ENCODE measurements at regions of chr18 and their contacts with region 1.

Region 1: DNA sequence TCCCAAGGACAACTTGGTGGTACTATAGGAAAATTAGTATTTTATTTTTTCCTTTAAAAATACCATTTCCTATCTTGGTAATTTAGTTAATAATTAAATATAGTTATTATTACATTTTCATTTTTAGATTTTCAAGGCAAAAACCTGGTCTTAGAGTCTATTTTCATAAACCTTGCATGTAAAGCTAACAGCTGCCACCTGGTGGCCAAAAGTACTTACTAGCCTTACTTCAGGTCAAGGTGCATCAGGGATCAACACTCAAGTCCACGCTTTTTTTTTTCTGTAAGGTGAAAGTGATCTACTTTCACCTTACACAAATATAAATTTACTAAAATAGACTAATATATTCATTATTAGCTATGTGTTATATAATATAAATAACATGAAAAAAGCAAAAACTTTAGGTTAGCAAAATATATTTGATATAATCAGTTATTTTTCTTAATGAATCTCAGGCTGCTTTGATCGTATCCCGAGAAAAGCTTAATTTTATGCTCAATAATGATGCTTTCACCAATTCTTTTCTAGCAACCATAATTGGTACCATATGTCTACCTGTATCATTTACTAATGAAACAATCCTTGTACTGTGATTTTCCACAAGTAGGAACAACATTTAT is 62.5 kb downstream of the RELCH start:
- DNase-seq: peak; percentile 52 to 83 (median 71)
- ATAC-seq: no peak
- H3K4me3 ChIP-seq: no peak overlapping the region
- H3K27ac ChIP-seq: no peak overlapping the region
- H3K4me1 ChIP-seq: no peaks in the 10 kb centered on the region
- H3K27me3 ChIP-seq: no peaks in the 10 kb centered on the region

Region 2: GRCh38 chr18:62091487-62092120 is 158.0 kb before region 1 on chr18:
- intact Hi-C with region 1: no loop called
- DNase-seq: no peak
- ATAC-seq: peak in 1 of 2 donors; percentile 57
- H3K4me3 ChIP-seq: no peak overlapping the region
- H3K27ac ChIP-seq: no peak overlapping the region
- H3K4me1 ChIP-seq: no peaks in the 10 kb centered on the region
- H3K27me3 ChIP-seq: no peaks in the 10 kb centered on the region

Region 3: DNA sequence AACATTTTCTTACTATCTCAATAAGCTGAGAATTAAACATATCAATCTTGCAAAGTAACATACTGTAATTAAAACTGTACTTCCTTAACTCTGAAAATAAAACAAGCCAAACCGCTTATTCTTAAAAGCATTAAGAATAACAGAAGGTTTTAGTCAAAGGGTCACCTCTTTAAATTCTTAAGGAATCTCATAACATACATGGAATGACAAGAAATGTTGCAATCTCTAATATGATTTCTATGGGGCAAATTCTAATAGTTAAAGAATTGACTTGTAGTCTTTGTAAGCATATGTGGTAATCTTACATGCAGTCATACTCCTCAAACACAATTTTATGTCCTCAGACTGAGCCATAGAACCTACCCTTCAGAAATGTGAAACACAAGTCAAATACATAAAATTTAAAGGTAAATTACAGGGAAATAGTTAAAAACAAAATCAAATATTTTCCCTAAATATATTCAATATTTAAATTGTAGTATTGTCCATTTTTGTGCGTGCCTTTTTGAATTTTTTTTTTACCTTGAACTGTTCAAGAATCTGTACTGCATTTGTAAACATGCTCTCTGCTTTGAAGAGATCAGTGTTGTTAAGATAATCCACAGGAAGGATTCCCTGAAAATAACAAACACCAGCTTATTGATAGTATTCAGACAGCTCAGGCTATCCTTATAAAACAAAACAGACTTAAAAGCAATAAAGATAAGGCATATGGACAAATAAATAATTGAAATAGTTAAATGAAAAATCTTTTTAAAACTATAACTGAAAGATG is 110.9 kb before region 1 on chr18:
- intact Hi-C with region 1: no loop called
- DNase-seq: no peak
- ATAC-seq: no peak
- H3K4me3 ChIP-seq: no peak overlapping the region
- H3K27ac ChIP-seq: no peak overlapping the region
- H3K4me1 ChIP-seq: no peaks in the 10 kb centered on the region
- H3K27me3 ChIP-seq: no peaks in the 10 kb centered on the region

Region 4: DNA sequence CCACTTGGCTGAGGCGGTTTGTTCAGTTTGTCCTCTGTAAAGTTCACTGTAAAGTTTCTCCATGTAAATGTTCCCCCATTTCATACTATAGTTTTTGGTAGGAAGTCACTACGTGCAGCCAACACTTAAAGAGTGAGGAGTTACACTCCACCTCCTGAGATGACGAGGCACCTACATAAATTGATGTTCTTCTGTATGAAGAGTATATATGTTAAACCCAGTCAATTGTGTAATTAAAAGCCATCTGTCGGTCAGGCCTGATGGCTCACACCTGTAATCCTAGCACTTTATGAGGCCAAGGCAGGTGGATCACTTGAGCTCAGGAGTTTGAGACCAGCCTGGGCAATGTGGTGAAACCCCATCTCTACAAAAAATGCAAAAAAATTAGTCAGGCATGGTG is 70.4 kb before region 1 on chr18:
- intact Hi-C with region 1: loop called in 3 of 4 experiments (anchors 5 to 10 kb)
- DNase-seq: no peak
- ATAC-seq: no peak
- H3K4me3 ChIP-seq: no peak overlapping the region
- H3K27ac ChIP-seq: no peak overlapping the region
- H3K4me1 ChIP-seq: peaks cover 2% of the 10 kb centered on the region
- H3K27me3 ChIP-seq: no peaks in the 10 kb centered on the region

Region 5: GRCh38 chr18:62186774-62187542 is 62.6 kb before region 1 on chr18 and contains the starts of genes PIGN and RELCH:
- intact Hi-C with region 1: loop called in 3 of 4 experiments (anchors 5 to 10 kb)
- DNase-seq: peak; percentile 95 to 97 (median 96)
- ATAC-seq: peak; percentile 99 to 100
- H3K4me3 ChIP-seq: peak within 1 kb of the TSS; percentile 65
- H3K27ac ChIP-seq: peak within 1 kb of the TSS; percentile 88
- H3K4me1 ChIP-seq: no peaks in the 10 kb centered on the region
- H3K27me3 ChIP-seq: no peaks in the 10 kb centered on the region
- total RNA-seq, gene PIGN: 14.4 to 21.6 (median 16.4) TPM
- total RNA-seq, gene RELCH: 13.5 to 22.7 (median 17.2) TPM

Region 6: GRCh38 chr18:62644773-62645172 is 395.2 kb after region 1 on chr18:
- intact Hi-C with region 1: no loop called
- DNase-seq: no peak
- ATAC-seq: no peak
- H3K4me3 ChIP-seq: no peak overlapping the region
- H3K27ac ChIP-seq: no peak overlapping the region
- H3K4me1 ChIP-seq: no peaks in the 10 kb centered on the region
- H3K27me3 ChIP-seq: no peaks in the 10 kb centered on the region

Measured in right cardiac atrium (tissue), 5 donors.